ENCODE measurements at regions of chr15 and their contacts with region 1.

Region 1: GRCh38 chr15:68316061-68316804 is 38.7 kb downstream of the FEM1B start:
- DNase-seq: peak in 1 of 3 donors; percentile 22
- ATAC-seq: peak; percentile 35
- H3K4me3 ChIP-seq: no peak overlapping the region
- H3K4me1 ChIP-seq: no peaks in the 10 kb centered on the region
- CTCF ChIP-seq: no peak

Region 2: GRCh38 chr15:68365140-68365745 is 49.0 kb after region 1 on chr15:
- intact Hi-C with region 1: no loop called
- DNase-seq: no peak
- ATAC-seq: no peak
- H3K4me3 ChIP-seq: no peak overlapping the region
- H3K4me1 ChIP-seq: no peaks in the 10 kb centered on the region
- CTCF ChIP-seq: no peak

Region 3: GRCh38 chr15:68543165-68544008 is 227.2 kb after region 1 on chr15:
- intact Hi-C with region 1: loop called in 1 of 2 experiments (anchors 10 kb)
- DNase-seq: peak in 1 of 3 donors; percentile 34
- ATAC-seq: peak; percentile 42
- H3K4me3 ChIP-seq: no peak overlapping the region
- H3K4me1 ChIP-seq: no peaks in the 10 kb centered on the region
- CTCF ChIP-seq: no peak

Measured in mucosa of descending colon (tissue), 3 donors.